Endothelial cell of umbilical vein (primary cell): ENCODE measurements at regions of chr2 and their contacts with region 1.

Region 1: GRCh38 chr2:189848276-189848675 is 64.0 kb downstream of the PMS1 start:
- DNase-seq: no peak
- H3K4me3 ChIP-seq: no peak overlapping the region
- H3K27ac ChIP-seq: no peak overlapping the region
- H3K4me1 ChIP-seq: no peaks in the 10 kb centered on the region
- H3K27me3 ChIP-seq: no peaks in the 10 kb centered on the region
- CTCF ChIP-seq: no peak
- POLR2A ChIP-seq: no peak

Region 2: DNA sequence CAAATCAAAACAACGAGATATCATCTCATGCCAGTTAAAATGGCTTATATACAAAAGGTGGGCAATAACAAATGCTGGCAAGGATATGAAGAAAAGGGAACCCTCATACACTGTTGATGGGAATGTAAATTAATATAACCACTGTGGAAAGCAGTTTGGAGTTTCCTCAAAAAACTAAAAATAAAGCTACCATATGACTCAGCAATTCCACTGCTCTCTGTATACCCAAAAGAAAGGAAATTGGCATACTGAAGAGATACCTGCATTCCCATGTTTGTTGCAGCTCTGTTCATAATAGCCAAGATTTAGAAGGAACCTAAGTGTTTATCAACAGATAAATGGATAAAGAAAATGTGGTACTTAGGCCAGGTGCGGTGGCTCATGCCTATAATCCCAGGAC is 89.4 kb after region 1 on chr2:
- CTCF ChIA-PET with region 1: no interaction called
- POLR2A ChIA-PET with region 1: no interaction called
- dilution Hi-C with region 1: no loop called
- intact Hi-C with region 1: no loop called
- DNase-seq: no peak
- H3K4me3 ChIP-seq: no peak overlapping the region
- H3K27ac ChIP-seq: no peak overlapping the region
- H3K4me1 ChIP-seq: no peaks in the 10 kb centered on the region
- H3K27me3 ChIP-seq: no peaks in the 10 kb centered on the region
- CTCF ChIP-seq: no peak
- POLR2A ChIP-seq: no peak

Region 3: DNA sequence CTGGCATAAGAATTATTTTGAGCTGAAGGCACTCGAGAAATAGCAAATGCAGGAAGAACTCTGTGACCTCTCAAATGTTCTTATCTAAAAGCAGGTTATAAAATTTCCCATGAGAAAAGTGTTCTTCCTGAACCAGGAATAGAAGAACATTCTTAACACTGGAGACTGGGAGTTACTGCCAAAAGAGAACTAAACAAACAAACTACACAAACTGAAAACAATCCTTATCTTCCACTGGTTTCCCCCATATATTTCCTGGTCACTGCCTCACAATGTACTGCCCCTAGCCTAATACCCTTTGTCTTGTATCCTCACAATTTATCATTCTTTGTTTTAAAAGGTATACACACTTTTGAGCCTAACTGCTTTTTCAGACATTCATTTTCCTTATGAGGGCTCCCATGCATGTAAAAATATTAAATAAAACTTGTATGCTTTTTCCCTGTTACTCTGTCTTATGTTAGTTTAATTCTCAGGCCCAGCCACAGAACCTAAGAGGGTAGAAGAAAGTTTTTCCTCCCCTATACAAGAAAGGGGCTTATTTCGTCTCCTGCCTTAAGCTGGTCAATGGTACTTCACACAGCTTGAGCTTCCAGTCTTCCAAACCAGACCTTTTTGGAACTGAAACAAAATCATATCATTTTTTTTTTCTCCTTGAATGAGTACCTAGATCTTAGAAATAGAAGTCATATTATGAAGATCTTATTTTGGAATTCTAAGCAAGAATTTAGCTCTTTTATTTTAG is 103.7 kb after region 1 on chr2:
- CTCF ChIA-PET with region 1: no interaction called
- POLR2A ChIA-PET with region 1: no interaction called
- dilution Hi-C with region 1: no loop called
- intact Hi-C with region 1: loop called (anchors 1 kb)
- DNase-seq: peak; percentile 91
- H3K4me3 ChIP-seq: no peak overlapping the region
- H3K27ac ChIP-seq: peak overlapping the region; percentile 76
- H3K4me1 ChIP-seq: peaks cover 13% of the 10 kb centered on the region
- H3K27me3 ChIP-seq: no peaks in the 10 kb centered on the region
- CTCF ChIP-seq: no peak
- POLR2A ChIP-seq: peak; percentile 68

Region 4: DNA sequence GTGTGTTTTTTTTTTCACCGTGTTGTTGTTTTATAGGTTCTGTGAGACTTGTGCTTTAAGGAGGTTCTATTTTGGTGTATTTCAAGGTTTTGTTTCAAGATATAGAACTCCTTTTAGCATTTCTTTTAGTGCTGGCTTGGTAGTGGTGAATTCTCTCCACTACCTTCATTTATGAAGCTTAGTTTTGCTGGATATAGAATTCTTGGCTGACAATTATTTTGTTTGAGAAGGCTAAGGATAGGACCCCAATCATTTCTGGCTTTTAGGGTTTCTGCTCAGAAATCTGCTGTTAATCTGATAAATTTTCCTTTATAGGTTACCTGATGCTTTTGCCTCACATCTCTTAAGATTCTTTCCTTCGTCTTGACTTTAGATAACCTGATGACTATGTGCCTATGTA is 147.4 kb after region 1 on chr2:
- CTCF ChIA-PET with region 1: no interaction called
- POLR2A ChIA-PET with region 1: no interaction called
- dilution Hi-C with region 1: no loop called
- intact Hi-C with region 1: no loop called
- DNase-seq: no peak
- H3K4me3 ChIP-seq: no peak overlapping the region
- H3K27ac ChIP-seq: no peak overlapping the region
- H3K4me1 ChIP-seq: no peaks in the 10 kb centered on the region
- H3K27me3 ChIP-seq: peaks cover 0 to 4% of the 10 kb centered on the region in 2 experiments
- CTCF ChIP-seq: no peak
- POLR2A ChIP-seq: no peak